ENCODE measurements at regions of chr9 and their contacts with region 1.

Region 1: DNA sequence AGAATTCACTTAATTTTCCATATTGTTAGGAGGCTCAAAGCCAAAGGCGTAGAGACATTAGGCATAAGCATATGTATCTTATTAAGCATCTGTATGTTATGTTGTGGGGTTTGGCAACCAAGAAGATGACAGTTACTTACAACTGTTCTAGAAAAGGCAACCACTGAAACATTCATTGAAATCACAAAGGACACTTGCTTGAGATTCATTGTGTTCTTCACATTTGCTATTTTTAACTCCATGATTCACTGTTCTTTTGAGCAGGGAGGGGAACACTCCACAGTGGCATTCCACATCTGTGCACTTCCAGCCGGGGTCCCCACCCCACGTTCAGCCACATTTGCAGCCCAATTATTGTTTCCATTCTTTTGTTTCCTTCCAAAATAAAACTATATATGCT is 107.1 kb downstream of the PALM2AKAP2 start:
- DNase-seq: no peak
- ATAC-seq: peak; percentile 76

Region 2: GRCh38 chr9:109831998-109832658 is 55.0 kb before region 1 on chr9:
- intact Hi-C with region 1: loop called (anchors 5 kb)
- DNase-seq: no peak
- ATAC-seq: peak; percentile 79

Region 3: DNA sequence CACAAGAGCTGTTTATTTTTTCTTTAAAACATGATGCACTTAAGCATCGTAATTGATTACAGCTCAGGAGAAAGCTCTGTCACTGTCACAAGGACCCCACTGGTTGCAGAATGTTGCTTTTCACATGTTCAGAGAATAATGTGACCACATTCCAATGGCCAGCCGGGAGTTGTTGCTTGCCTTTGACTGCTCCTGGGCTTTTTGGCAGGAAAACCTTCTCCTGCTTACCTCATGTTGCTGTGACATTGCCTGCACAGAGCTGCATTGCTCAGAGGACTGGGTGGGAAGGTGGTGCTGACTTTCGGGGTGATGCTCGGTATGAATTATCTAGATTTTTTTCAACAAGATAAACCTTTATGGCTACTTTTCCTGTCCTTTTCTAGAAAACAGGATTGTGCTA is 18.9 kb before region 1 on chr9:
- intact Hi-C with region 1: loop called (anchors 1 kb)
- DNase-seq: no peak
- ATAC-seq: peak; percentile 59

Region 4: GRCh38 chr9:109935406-109936087 is 48.5 kb after region 1 on chr9:
- intact Hi-C with region 1: no loop called
- DNase-seq: no peak
- ATAC-seq: no peak